Motor neuron (in vitro differentiated cells): ENCODE measurements at regions of chr10 and their contacts with region 1.

Region 1: DNA sequence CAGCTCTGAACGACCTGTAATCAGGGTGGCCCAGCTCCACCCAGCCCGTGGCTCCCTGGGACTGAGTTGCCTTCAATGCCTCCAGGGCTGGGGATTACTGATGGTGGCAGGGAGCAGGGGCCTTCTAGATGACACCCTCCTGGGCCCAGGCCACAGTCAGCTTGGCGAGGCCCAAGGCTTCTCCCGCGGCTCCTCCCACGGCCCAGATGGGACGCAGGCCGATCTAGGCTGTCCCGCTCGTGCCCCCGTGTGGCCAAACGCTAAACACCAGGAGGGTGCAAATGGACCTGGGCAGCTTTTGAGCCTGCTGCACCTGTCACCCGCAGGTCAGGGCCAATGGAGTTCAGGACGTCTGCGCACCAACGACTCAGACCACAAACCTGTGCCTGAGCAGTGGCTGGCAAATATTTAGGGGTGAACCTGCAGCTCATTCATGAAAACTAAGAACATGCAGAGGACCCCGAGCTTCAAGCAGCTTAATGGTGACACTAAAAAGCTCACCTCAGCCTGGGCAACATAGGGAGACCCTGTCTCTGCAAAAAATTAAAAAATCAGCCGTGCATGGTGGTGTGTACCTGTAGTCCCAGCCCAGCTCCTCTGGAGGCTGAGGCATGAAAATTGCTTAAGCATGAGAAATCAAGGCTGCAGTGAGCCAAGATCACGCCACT is 43.2 kb downstream of the ASB13 start:
- ATAC-seq: peak; percentile 81 to 97 (median 92)
- H3K4me3 ChIP-seq: no peak overlapping the region
- H3K27ac ChIP-seq: no peak overlapping the region
- H3K4me1 ChIP-seq: peaks cover 14 to 20% of the 10 kb centered on the region in 2 donors

Region 2: GRCh38 chr10:5293691-5294550 is 329.3 kb before region 1 on chr10:
- in situ Hi-C with region 1: no loop called
- ATAC-seq: peak; percentile 11 to 81 (median 60)
- H3K4me3 ChIP-seq: no peak overlapping the region
- H3K27ac ChIP-seq: no peak overlapping the region
- H3K4me1 ChIP-seq: no peaks in the 10 kb centered on the region

Region 3: GRCh38 chr10:5412277-5412941 is 210.8 kb before region 1 on chr10 and contains the start of gene NET1:
- in situ Hi-C with region 1: no loop called
- ATAC-seq: peak; percentile 97 to 99 (median 97)
- H3K4me3 ChIP-seq: peak within 1 kb of the TSS; percentile 81 to 97 (median 91)
- H3K27ac ChIP-seq: peak within 1 kb of the TSS; percentile 48 to 64
- H3K4me1 ChIP-seq: peaks cover 0 to 14% of the 10 kb centered on the region in 2 donors
- total RNA-seq, gene NET1: 11.8 to 78.8 (median 23.4) TPM

Region 4: DNA sequence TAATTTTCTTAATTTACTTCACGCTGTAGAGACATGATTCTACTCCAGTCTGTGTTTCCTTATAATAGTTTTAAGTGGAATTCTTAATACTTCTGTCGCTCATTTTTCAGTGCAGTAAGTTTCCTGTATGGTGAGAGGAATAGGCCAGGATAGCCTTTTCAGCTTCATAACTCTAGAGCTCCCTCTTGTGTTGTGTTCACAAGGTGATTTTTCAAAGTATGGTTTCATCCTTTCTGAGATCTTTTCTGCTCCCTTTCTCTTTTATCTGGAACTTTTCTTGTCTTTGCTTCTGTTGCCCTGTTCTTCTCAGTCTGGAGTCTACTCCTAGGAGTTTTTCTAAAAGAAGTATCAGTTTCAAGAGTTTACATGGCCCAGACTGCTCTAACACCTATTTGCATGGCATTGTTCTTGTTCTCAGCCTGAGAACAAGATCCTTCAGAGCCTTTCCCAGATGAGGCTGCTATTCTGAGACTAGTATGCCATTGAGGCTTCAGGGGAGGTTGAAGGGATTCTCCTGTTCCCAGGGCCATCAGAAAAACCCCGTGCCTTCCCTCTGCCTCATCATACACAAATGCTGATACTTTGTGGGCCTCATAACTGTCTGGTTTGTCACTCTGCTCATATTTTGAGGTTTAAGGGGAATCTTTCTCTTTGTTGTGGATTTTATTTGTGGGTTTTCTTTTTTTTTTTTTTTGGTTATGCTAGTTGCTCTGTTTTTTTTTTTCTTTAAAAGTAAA is 189.0 kb before region 1 on chr10:
- in situ Hi-C with region 1: loop called in 1 of 9 experiments (anchors 10 kb)
- ATAC-seq: peak in 5 of 8 experiments; percentile 48 to 93 (median 83)
- H3K4me3 ChIP-seq: no peak overlapping the region
- H3K27ac ChIP-seq: no peak overlapping the region
- H3K4me1 ChIP-seq: no peaks in the 10 kb centered on the region

Region 5: GRCh38 chr10:5446390-5446926 is 176.8 kb before region 1 on chr10:
- in situ Hi-C with region 1: loop called in 5 of 9 experiments (anchors 5 to 25 kb)
- ATAC-seq: peak; percentile 86 to 100 (median 99)
- H3K4me3 ChIP-seq: peak overlapping the region; percentile 17 to 33 (median 31)
- H3K27ac ChIP-seq: no peak overlapping the region
- H3K4me1 ChIP-seq: peaks cover 7 to 12% of the 10 kb centered on the region in 2 donors

Region 6: DNA sequence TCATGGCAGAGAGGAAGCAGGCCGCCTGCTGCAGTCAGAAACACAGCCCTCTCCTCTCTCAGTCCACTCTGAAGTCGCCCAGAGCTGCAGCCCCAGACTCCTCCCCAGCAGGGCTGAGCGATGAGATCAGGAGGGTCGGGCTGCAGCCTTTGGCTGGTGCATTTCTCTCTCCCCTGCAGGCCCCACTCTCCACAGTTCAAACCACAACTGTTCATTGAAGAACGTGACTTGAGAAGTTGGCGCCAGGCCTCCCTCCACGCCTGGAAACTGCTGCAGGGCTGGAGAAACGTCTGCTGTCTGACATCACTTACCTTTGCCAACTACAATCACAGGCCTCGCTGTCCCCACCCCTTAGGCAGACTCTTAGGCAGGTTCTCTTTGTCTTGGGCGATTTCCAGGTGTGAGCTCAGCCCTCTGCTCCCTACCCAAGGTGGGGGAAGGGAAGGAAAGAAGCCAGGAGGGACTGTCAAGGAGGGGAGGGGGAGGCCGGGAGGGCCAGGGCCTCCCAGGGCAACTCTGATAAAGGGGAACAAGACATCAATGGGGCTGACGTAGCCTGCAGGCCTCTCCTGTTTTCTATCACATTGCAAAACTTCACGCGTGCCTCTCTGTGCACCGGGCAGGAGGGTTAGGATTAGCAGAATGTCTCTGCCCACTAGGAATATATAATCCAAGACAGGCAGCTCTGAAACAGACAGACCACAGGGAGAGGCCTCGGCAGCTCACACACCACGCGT is 156.6 kb before region 1 on chr10:
- in situ Hi-C with region 1: loop called in 2 of 9 experiments (anchors 25 kb)
- ATAC-seq: peak; percentile 76 to 95 (median 82)
- H3K4me3 ChIP-seq: no peak overlapping the region
- H3K27ac ChIP-seq: peak overlapping the region; percentile 33 to 55
- H3K4me1 ChIP-seq: peaks cover 23 to 28% of the 10 kb centered on the region in 2 donors